A673 (cell line): ENCODE measurements at regions of chr7 and their contacts with region 1.

Region 1: DNA sequence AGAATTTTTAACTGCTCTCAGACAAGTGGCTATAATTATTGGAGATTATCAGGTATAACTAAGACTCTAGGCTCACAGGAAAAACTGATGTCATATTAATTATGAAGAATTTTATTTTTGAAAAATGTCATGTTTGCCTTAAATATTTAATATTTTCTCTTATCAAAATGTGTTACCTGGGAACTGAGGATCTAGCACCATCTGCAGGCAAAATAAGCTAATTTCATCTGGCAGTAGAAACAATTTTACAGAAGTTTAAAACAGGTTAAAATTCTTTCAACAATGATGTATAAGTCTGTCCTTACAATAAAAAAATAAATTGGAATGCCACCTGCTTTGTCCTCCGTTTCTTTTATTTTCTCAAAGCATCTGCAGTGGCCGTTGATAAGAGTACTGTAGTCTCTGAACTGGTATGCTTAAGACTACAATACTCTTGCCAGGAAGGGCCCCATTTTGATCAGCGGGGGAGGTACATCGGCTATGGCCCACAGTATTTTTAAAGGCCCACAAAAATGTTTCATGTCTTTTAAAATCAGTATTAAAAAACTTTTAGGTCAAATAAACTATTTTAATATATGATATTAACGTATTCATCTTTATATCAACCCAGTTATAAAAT is 81.3 kb downstream of the VWDE start:
- DNase-seq: no peak
- H3K4me3 ChIP-seq: no peak overlapping the region
- H3K27ac ChIP-seq: no peak overlapping the region
- H3K4me1 ChIP-seq: no peaks in the 10 kb centered on the region
- H3K27me3 ChIP-seq: no peaks in the 10 kb centered on the region
- CTCF ChIP-seq: peak; percentile 82

Region 2: DNA sequence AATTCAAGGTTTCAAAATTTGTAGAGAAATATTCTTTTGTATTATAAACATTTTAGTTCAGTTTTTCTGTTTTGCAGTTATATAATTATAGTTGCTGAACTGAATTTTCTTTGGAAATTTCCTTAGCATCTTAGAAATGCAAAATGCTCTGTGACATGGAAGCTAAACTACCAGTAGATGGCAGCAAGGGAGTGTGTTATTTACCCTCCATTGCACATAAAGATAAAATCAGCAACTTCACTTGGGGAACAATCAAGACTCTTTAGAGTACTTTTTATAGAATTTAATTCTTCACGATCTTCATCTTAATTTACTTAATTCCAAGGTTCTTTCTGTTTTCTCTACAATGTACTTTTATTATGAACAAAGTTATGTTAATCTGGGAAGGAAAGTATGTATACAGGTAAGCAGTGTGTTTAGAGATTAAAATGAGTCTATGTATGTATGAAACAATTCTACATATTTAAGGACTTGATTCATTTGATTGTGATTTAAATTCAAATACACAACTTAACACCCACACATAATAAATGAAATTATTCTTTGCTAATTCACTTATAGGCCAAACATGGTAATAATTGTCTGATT is 894.6 kb before region 1 on chr7:
- CTCF ChIA-PET with region 1: no interaction called
- POLR2A ChIA-PET with region 1: no interaction called
- intact Hi-C with region 1: loop called (anchors 5 kb)
- DNase-seq: peak; percentile 74
- H3K4me3 ChIP-seq: no peak overlapping the region
- H3K27ac ChIP-seq: no peak overlapping the region
- H3K4me1 ChIP-seq: no peaks in the 10 kb centered on the region
- H3K27me3 ChIP-seq: no peaks in the 10 kb centered on the region
- CTCF ChIP-seq: peak; percentile 87